PC-9 (cell line): ENCODE measurements at regions of chr16 and their contacts with region 1.

Region 1: DNA sequence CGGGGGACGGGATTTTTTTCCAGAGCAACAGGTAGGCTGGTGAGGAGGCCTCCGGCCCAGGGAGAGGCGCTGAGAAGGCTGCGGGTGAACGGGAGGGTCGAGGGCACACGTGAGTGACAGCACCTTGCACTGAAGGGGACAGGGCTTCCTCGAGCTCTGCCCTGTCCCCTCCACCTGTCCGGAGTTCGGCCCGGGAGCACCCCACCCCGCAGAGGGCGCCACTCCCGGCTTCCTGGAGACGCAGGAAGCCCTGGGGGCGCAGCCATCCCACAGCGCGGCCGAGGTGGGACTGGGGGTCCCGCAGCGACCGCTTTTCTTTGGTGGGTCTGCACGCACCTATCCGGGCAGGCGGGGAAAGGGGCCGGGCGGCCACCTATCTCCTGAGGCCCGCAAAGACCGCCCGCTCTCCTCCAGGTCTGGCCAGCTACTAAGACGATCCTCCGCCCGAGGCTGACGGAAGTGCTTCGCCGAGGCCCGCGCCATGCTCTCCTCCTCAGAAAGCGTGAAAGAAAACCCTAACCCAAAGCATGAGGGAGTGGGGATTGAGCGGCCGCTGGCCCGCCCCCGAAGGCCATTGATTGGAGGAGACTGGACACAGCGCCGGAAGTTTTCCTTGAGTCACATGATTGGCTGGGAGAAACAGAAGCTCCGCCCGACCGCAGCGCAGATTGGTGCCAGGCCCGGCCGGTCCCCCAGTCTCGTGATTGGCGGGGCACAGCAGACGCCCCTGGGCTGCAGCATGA is 34.3 kb downstream of the DDX19A start:
- DNase-seq: peak; percentile 94 to 96
- H3K4me3 ChIP-seq: peak overlapping the region; percentile 100
- H3K27ac ChIP-seq: peak overlapping the region; percentile 86
- H3K4me1 ChIP-seq: peaks cover 10% of the 10 kb centered on the region
- H3K27me3 ChIP-seq: no peaks in the 10 kb centered on the region
- CTCF ChIP-seq: peak; percentile 50

Region 2: GRCh38 chr16:69726296-69727060 is 654.6 kb before region 1 on chr16 and contains the start of gene NQO1:
- CTCF ChIA-PET with region 1: interaction called, 12 read pairs
- POLR2A ChIA-PET with region 1: interaction called, 3 read pairs
- intact Hi-C with region 1: no loop called
- DNase-seq: peak; percentile 98 to 99
- H3K4me3 ChIP-seq: peak within 1 kb of the TSS; percentile 99
- H3K27ac ChIP-seq: peak within 1 kb of the TSS; percentile 100
- H3K4me1 ChIP-seq: peaks cover 48% of the 10 kb centered on the region
- H3K27me3 ChIP-seq: no peaks in the 10 kb centered on the region
- CTCF ChIP-seq: no peak
- total RNA-seq, gene NQO1: 837 and 853 TPM in 2 replicates

Region 3: GRCh38 chr16:70428178-70428998 is 47.4 kb after region 1 on chr16:
- CTCF ChIA-PET with region 1: interaction called, 3 read pairs
- POLR2A ChIA-PET with region 1: interaction called, 5 read pairs
- intact Hi-C with region 1: loop called (anchors 1 kb)
- DNase-seq: peak; percentile 82 to 89
- H3K4me3 ChIP-seq: peak overlapping the region; percentile 13; the same call in 1 of the 2 replicates
- H3K27ac ChIP-seq: peak overlapping the region; percentile 75
- H3K4me1 ChIP-seq: peaks cover 52% of the 10 kb centered on the region
- H3K27me3 ChIP-seq: no peaks in the 10 kb centered on the region
- CTCF ChIP-seq: no peak

Region 4: DNA sequence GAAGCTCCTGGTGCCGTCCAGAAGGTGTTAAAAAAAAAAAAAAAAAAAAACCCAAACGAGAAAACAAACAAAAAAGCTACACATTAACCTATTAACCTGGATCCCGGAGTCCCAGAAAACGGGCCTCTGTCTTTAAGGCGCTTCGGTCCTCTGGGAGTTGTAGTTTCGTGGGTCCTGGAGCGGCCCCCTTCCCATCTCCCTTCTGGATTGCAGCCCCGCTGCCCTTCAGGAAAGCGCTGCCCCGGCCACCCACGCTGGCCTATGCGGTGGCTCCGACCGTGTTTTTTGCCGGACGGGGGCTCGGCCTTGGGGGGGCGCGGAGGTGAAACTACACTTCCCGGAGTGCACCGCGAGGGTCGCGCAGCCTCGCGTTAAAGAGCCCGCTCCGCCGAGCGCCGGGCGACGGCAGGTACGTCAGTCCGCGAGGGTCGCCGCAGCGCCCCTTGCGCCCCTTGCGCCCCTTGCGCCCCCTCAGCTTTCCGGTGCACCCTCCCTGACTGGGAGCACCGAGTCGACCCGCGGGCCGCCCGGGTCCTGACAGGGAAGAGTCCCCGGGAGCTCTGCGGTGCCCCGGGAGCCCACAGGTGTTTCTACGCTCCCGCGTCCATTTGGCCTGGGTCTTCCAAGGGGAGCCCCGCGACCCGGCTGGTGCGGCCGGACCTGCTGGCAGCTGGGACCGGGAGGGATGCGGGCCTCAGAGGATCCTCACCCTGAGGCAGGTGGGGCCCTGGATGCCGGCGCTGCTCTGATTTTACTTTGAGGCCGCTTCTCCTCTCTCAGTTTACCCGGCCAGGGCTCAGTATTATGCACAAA is 73.4 kb after region 1 on chr16 and contains the start of gene FCSK:
- CTCF ChIA-PET with region 1: no interaction called
- POLR2A ChIA-PET with region 1: interaction called, 17 read pairs
- intact Hi-C with region 1: loop called (anchors 2 kb)
- DNase-seq: peak in 1 of 2 experiments; percentile 67
- H3K4me3 ChIP-seq: peak within 1 kb of the TSS; percentile 96
- H3K27ac ChIP-seq: peak within 1 kb of the TSS; percentile 89
- H3K4me1 ChIP-seq: peaks cover 14% of the 10 kb centered on the region
- H3K27me3 ChIP-seq: no peaks in the 10 kb centered on the region
- CTCF ChIP-seq: no peak
- total RNA-seq, gene FCSK: 17.0 and 19.3 TPM in 2 replicates

Region 5: DNA sequence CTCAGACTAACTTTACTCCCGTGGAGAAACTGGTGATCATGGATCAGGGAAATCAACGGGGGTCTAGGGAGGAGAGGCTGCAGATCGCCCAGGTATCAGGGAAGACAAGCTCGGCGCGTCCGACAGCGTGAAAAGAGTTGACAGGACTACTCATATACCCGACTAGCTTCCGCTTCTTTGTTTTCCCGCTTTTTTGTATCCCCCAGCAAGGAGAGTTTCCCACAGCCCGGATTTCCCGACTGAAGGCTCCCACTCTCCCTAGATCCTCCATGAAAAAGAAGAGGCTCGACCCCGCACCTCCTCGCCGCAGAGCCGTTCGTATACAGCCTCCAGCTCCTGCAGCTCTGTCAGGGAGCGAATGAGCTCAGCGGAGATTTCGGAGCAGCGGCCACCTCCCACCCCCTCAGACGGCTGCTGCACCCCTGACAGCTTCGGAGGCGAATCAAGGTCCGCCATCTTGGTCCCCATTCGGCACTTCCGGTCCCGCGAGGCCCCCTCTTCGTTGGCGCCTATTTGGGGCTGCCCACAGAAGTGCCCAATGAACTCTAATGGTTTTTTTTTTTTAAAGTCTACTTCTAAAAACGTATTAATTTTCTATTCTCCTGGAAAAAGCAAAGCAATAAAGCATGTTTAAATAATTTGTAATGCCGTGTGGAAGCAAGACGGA is 142.2 kb after region 1 on chr16 and contains the start of gene COG4:
- CTCF ChIA-PET with region 1: no interaction called
- POLR2A ChIA-PET with region 1: interaction called, 14 read pairs
- intact Hi-C with region 1: loop called (anchors 2 kb)
- DNase-seq: peak; percentile 66 to 82
- H3K4me3 ChIP-seq: peak within 1 kb of the TSS; percentile 99
- H3K27ac ChIP-seq: peak within 1 kb of the TSS; percentile 88
- H3K4me1 ChIP-seq: peaks cover 35% of the 10 kb centered on the region
- H3K27me3 ChIP-seq: no peaks in the 10 kb centered on the region
- CTCF ChIP-seq: no peak
- total RNA-seq, gene COG4: 54.2 and 61.1 TPM in 2 replicates